IMR-90 (cell line): ENCODE measurements at regions of chr11 and their contacts with region 1.

Region 1: DNA sequence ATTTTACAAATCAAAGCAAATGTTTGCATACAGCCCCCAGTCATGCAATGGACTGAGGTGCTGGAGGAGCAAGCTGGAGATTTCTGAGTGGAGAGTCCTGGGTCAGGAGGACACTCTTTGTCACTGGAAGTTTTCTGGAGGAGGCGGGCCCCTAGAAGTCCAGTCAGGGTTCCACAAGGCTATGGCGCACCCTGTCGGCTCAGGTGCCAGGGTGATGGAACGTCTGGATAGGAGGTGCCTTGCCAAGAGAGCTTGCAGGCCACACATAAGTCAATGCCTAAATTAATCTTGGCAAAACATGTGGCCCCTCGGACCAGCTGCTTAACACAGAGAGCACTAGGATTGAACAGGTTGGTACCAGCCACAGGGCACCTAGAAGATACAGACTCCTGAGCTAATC is 174.7 kb upstream of the CADM1 start:
- DNase-seq: no peak
- ATAC-seq: no peak
- H3K4me3 ChIP-seq: no peak overlapping the region
- H3K27ac ChIP-seq: no peak overlapping the region
- H3K4me1 ChIP-seq: peaks cover 19% of the 10 kb centered on the region
- H3K27me3 ChIP-seq: no peaks in the 10 kb centered on the region
- CTCF ChIP-seq: no peak
- POLR2A ChIP-seq: no peak
- RAD21 ChIP-seq: no peak

Region 2: DNA sequence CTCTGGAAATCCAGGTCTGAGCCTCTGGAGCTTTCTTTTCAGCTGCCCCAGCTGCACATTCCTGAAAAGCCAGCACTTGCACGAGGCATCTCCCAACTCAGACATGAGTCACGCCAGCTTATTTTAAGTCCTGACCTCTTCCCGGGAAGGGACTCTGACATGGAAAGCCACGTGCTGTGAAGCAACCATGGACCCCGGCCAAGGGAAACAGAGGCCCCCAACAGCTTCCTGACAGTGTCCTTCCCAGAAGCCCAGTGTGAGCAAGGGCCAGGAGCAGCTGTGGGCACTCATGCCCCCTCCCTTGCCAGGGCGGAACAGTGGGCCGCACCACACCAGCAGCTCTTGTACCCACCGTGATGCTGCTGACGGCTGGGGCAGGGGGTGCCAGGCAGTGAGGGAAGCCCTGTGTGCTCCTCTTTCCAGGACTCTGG is 55.9 kb before region 1 on chr11:
- CTCF ChIA-PET with region 1: no interaction called
- POLR2A ChIA-PET with region 1: no interaction called
- dilution Hi-C with region 1: no loop called
- in situ Hi-C with region 1: no loop called
- intact Hi-C with region 1: loop called (anchors 2 kb)
- DNase-seq: peak; percentile 100
- ATAC-seq: peak; percentile 87
- H3K4me3 ChIP-seq: no peak overlapping the region
- H3K27ac ChIP-seq: peak overlapping the region; percentile 66
- H3K4me1 ChIP-seq: peaks cover 17% of the 10 kb centered on the region
- H3K27me3 ChIP-seq: peaks cover 3% of the 10 kb centered on the region
- CTCF ChIP-seq: no peak
- POLR2A ChIP-seq: no peak
- RAD21 ChIP-seq: 0 out of 2 replicates have a peak, but pooled peaks have one; percentile 23

Region 3: DNA sequence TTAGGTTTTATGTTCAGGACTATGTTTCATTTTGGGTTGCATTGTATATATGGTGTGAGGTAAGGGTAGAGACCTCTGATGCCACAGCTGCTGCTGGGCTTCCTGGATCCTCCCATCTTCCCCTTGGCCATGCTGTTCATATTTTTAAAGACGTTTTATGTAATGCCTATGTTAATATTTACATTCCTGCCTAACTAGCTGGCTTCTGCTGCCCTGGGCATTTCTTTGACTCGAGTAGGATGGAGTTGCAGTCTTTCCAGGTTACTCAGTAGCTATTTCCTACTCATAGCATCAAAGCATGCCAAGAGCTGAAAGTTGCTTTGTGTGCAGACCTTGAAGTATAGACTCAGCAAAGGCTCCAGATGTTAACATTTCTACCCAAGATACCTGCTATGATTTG is 45.7 kb after region 1 on chr11:
- CTCF ChIA-PET with region 1: interaction called, 3 read pairs
- POLR2A ChIA-PET with region 1: no interaction called
- dilution Hi-C with region 1: no loop called
- in situ Hi-C with region 1: no loop called
- intact Hi-C with region 1: loop called (anchors 2 kb)
- DNase-seq: peak; percentile 90
- ATAC-seq: peak; percentile 91
- H3K4me3 ChIP-seq: no peak overlapping the region
- H3K27ac ChIP-seq: no peak overlapping the region
- H3K4me1 ChIP-seq: peaks cover 2% of the 10 kb centered on the region; the same call in 1 of the 2 replicates
- H3K27me3 ChIP-seq: no peaks in the 10 kb centered on the region
- CTCF ChIP-seq: no peak
- POLR2A ChIP-seq: no peak
- RAD21 ChIP-seq: no peak